Activated T-helper 1 cell treated with anti-CD3 and anti-CD28 coated beads, Interleukin-12 subunit alpha, Interleukin-12 subunit beta, Interleukin-2, Interleukin-4 antibody, amounts not matched to agents 30 ng/mL and 10 ng/mL and 1 ng/mL, durations not matched to agents 14 hours and 24 hours and 36 hours (primary cell): ENCODE measurements at regions of chr6 and their contacts with region 1.

Region 1: DNA sequence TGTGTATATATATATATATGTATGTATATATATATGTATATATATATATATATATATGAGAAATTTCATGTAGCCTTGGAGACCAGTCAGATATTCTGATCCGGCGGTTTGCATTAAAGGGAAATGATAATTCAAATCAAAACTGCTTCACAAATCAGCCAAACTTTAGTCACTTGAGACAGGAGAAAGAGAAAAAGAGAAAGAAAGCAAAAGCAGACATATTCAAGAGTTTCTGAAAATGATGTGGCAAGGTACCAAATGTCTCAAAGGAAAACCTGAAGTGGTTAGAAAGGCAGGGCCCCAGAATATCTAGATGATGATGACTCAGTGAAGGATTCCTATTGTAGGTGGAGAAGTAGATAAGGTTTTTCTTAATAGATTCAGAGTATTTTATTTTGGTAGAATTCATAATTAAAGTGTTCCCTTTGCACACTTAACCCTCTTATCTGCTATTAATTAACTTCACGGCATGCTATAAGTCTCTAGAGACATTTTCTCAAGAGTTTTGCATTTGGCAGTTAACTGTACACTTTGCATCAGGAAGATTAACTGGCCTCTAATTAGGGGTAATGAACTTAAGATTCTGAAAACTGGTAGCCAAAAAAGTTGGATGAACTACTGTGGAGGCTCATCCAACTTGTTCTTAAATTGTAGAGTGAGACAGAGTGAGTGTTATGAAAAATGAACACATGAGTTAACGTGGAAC is 50.1 kb upstream of the ASF1A start:
- DNase-seq: peak; percentile 11
- H3K4me3 Mint-ChIP-seq: peak overlapping the region; percentile 34
- H3K27ac Mint-ChIP-seq: peak overlapping the region; percentile 19
- H3K4me1 Mint-ChIP-seq: peaks cover 27% of the 10 kb centered on the region
- H3K27me3 Mint-ChIP-seq: no peaks in the 10 kb centered on the region

Region 2: DNA sequence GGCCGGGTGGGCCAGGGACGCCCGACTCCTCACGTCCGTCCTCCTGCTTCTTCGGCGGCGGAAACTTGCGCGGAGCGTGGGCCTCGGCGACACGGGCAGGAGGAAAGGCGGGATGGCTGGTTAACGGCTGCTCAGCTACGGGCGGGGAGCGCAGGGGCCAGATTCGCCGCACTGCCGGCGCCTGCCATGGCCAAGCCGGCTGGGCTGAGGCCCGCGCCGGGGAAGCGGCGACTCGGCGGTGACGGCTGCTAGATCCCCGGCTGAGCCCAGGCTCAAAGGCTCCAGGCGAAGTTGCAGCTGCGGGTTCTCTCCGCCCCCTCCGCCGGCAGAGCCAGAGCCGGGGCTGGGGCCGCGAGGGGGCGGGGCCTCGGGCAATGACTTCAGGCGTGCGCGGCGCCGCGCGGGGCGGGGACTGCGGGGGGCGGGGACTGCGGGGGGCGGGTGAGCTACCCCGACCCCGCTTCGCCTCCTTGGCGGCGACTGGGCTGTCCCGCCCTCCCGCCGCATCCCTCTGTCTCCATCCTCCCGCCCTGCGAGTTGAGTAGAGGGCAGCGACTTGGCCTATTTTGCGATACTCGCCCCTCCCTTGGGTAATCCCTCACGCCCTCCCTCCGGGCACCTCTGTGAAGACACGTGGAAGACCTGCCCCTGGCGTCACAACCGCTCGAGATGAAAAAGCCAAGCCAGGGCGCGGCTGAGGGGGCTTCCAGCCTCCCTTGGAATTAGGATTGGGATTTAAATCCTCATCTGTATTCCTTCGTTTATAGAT is 192.4 kb before region 1 on chr6 and contains the start of gene CEP85L:
- intact Hi-C with region 1: loop called (anchors 2 kb)
- DNase-seq: peak; percentile 86
- H3K4me3 Mint-ChIP-seq: peak within 1 kb of the TSS; percentile 85
- H3K27ac Mint-ChIP-seq: peak within 1 kb of the TSS; percentile 92
- H3K4me1 Mint-ChIP-seq: peaks cover 52% of the 10 kb centered on the region
- H3K27me3 Mint-ChIP-seq: no peaks in the 10 kb centered on the region
- total RNA-seq, gene CEP85L: 50.9 and 51.4 TPM in 2 replicates

Region 3: DNA sequence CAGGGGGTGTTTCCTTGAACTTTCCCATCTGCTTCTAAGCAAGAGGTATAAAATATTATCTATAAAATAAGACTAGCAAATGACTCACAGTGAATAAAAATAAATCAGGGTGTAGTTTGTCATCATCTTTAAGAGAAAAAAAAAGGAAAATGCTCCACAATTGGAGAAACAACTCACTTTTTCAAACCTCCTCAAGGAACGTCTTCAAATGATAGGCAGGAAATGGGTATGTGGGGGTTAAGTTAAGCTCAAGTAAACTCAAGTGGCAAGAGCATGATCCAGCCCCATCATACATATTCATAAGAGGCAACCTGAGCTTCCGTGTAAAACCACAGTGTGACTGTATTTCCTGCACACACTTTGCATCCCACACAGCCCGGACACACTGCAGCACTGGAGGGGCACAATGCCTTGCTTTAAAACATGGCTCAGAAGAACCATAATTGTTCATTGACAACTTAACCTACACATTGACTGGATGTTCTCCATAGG is 133.9 kb before region 1 on chr6:
- intact Hi-C with region 1: loop called (anchors 1 kb)
- DNase-seq: peak; percentile 77
- H3K4me3 Mint-ChIP-seq: peak overlapping the region; percentile 96
- H3K27ac Mint-ChIP-seq: peak overlapping the region; percentile 99
- H3K4me1 Mint-ChIP-seq: peaks cover 94% of the 10 kb centered on the region
- H3K27me3 Mint-ChIP-seq: peaks cover under 1% of the 10 kb centered on the region

Region 4: GRCh38 chr6:118800394-118801071 is 43.3 kb before region 1 on chr6:
- intact Hi-C with region 1: loop called (anchors 5 kb)
- DNase-seq: peak; percentile 79
- H3K4me3 Mint-ChIP-seq: peak overlapping the region; percentile 17
- H3K27ac Mint-ChIP-seq: peak overlapping the region; percentile 15
- H3K4me1 Mint-ChIP-seq: peaks cover 35% of the 10 kb centered on the region
- H3K27me3 Mint-ChIP-seq: no peaks in the 10 kb centered on the region

Region 5: GRCh38 chr6:118893807-118894424 is 50.1 kb after region 1 on chr6 and contains the start of gene ASF1A:
- intact Hi-C with region 1: loop called (anchors 1 kb)
- DNase-seq: peak; percentile 95
- H3K4me3 Mint-ChIP-seq: peak within 1 kb of the TSS; percentile 94
- H3K27ac Mint-ChIP-seq: peak within 1 kb of the TSS; percentile 96
- H3K4me1 Mint-ChIP-seq: peaks cover 49% of the 10 kb centered on the region
- H3K27me3 Mint-ChIP-seq: no peaks in the 10 kb centered on the region
- total RNA-seq, gene ASF1A: 36.0 and 42.9 TPM in 2 replicates

Region 6: DNA sequence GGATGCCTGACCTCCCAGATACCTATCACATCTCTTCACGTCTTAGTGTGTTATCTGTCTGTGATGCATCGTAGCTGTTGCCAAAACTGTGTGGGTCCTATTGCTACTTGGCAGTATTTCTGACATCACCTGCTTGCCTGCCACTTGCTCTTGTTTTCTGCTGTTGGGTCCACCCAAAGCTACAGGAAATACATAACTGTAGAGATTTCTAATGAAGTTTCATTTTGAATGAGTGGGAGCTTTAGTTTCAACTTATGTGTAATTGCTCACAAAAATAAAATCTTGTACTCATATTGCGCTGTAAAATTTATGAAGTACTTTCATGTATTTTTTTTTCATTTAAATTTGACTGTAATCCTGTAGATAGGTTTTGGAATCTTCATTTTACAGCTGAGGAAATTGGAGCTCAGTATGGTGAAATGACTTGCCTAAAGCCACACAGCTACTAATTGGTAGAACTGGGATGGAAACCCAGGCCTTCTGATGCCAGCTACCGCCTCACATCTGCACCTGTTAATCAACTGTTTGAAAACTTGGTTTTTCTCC is 619.3 kb after region 1 on chr6:
- intact Hi-C with region 1: loop called (anchors 10 kb)
- DNase-seq: peak; percentile 22
- H3K4me3 Mint-ChIP-seq: peak overlapping the region; percentile 1
- H3K27ac Mint-ChIP-seq: peak overlapping the region; percentile 72
- H3K4me1 Mint-ChIP-seq: peaks cover 82% of the 10 kb centered on the region
- H3K27me3 Mint-ChIP-seq: no peaks in the 10 kb centered on the region